Right cardiac atrium (tissue), 5 donors: ENCODE measurements at regions of chr2 and their contacts with region 1.

Region 1: GRCh38 chr2:100562732-100563720 is at the start of gene PDCL3:
- DNase-seq: peak; percentile 96 to 99 (median 98)
- ATAC-seq: peak; percentile 98
- H3K4me3 ChIP-seq: peak within 1 kb of the TSS; percentile 82
- H3K27ac ChIP-seq: peak within 1 kb of the TSS; percentile 83
- H3K4me1 ChIP-seq: peaks cover 3% of the 10 kb centered on the region
- H3K27me3 ChIP-seq: no peaks in the 10 kb centered on the region
- total RNA-seq, gene PDCL3: 20.6 to 29.1 (median 26.6) TPM

Region 2: DNA sequence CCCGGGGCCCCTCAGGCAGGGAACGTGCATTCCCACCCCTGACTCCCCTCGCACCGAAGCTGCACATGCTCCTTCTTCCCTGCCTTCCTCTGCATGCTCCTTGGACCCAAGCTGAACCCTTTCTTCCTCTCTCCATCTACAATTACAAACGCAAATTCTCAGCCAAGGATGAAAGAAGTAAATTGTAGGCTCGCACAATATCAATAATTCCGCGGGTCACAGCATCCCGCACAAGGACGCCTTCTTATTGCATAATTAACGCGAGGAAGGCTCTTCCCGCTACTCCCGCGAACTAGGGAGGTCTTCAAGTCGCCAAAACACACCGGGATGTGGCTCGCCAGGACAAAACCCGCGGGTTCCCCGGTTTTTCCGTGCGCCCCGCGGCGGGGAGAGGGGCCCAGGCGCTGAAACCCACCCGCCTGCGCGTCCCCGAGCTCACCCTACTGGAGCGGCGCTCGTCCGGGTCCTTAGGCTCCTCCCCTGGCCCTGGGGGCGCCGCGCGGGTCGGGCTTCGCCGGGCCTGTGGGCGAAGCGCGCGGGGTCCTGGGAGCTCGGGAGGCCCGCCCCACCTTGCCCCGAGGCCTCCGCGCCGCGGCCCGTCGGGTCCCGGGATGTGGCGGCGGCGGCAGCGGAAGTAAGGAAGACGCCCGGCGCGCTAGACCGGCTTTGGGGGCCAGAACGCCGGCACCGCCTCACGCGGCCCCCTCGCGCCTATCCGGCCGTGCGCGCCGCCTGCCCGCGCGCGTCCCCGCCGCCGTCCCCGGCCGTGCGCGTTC is 145.9 kb before region 1 on chr2 and contains the start of gene CHST10:
- intact Hi-C with region 1: loop called in 2 of 4 experiments (anchors 10 kb)
- DNase-seq: peak; percentile 63 to 88 (median 87)
- ATAC-seq: peak; percentile 96
- H3K4me3 ChIP-seq: peak within 1 kb of the TSS; percentile 84
- H3K27ac ChIP-seq: peak within 1 kb of the TSS; percentile 51
- H3K4me1 ChIP-seq: peaks cover 3% of the 10 kb centered on the region
- H3K27me3 ChIP-seq: no peaks in the 10 kb centered on the region
- total RNA-seq, gene CHST10: 12.3 to 25.7 (median 23.0) TPM

Region 3: DNA sequence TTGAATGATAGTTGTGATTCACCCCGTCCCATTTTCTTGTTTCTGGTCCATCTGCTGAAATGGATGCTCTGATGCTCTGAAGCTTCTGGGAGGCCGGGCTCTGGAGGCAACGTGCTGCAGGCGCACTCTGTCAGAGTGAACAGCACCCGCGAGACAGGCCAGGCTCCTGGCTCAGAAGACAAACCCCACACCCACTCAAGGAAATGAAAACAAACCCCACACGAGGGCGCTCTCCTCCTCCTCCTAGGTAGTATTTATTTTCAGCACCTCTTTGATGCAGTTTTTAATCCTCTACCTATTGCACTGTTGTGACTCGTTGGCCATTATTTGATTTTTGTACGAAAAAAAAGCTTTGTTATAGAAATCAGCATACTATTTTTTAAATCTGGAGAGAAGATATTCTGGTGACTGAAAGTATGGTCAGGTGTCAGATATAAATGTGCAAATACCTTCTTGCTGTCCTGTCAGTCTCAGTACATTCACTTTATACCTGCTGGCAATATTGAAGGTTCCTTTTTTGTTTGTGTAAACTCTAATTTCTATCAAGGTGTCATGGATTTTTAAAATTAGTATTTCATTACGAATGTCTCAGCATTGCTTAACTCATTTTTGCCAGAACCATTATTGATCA is 135.3 kb before region 1 on chr2:
- intact Hi-C with region 1: loop called in 1 of 4 experiments (anchors 10 kb)
- DNase-seq: peak; percentile 56 to 81 (median 76)
- ATAC-seq: peak; percentile 76 to 83
- H3K4me3 ChIP-seq: no peak overlapping the region
- H3K27ac ChIP-seq: no peak overlapping the region
- H3K4me1 ChIP-seq: no peaks in the 10 kb centered on the region
- H3K27me3 ChIP-seq: no peaks in the 10 kb centered on the region